AG04450 (cell line): ENCODE measurements at regions of chr14 and their contacts with region 1.

Region 1: DNA sequence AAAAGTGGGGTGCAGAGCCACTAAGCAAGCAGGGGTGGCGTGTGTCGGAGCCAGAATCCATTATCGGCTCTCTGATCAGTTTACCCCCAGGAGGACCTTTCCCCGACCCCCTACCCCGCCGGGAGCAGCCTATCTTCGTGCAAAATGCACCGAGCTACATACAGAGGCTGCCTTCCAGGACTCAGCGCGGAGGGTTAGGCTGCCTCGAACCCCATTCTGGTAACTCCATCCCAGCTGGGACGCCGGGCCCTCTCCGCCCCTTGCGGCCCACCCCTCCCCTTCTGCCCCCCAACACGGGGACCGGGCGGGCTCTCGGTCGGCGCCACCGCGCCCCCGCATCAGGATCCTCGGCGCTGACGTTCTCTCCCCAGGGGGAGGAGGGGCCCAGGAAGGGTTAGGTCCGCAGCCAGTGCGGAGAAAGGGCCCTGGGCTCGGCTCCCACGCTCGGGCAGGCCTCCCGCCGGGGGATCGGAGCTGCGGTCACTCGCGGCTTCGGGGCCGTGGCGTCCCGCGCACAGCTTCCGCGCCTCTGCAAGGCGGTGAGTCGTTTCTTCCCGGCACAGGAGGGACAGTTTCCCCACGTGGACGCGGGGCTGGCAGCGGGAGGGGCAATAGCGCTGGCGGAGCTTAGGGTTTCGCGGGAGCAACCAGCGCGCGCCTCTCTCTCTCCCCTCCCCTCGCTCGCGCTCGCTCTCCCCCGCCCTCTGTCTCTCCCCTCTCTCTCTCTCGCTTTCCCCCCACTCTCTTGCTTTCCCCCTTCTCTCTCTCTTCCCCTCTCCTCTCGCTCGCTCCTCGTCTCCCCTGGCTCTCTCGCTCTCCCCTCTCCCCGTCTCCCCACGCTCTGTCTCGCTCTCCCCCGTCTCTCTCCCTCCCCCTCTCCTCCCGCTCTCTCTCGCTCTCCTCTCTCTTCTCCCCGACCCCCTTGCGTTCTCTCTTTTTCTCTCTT is 12.5 kb upstream of the MAP3K9 start:
- DNase-seq: no peak
- H3K4me3 ChIP-seq: peak overlapping the region; percentile 70
- H3K27ac ChIP-seq: no peak overlapping the region
- H3K27me3 ChIP-seq: no peaks in the 10 kb centered on the region
- CTCF ChIP-seq: no peak

Region 2: GRCh38 chr14:70622111-70622712 is 199.6 kb before region 1 on chr14:
- CTCF ChIA-PET with region 1: interaction called, 10 read pairs
- POLR2A ChIA-PET with region 1: no interaction called
- DNase-seq: no peak
- H3K4me3 ChIP-seq: no peak overlapping the region
- H3K27ac ChIP-seq: no peak overlapping the region
- H3K27me3 ChIP-seq: no peaks in the 10 kb centered on the region
- CTCF ChIP-seq: peak; percentile 79

Region 3: DNA sequence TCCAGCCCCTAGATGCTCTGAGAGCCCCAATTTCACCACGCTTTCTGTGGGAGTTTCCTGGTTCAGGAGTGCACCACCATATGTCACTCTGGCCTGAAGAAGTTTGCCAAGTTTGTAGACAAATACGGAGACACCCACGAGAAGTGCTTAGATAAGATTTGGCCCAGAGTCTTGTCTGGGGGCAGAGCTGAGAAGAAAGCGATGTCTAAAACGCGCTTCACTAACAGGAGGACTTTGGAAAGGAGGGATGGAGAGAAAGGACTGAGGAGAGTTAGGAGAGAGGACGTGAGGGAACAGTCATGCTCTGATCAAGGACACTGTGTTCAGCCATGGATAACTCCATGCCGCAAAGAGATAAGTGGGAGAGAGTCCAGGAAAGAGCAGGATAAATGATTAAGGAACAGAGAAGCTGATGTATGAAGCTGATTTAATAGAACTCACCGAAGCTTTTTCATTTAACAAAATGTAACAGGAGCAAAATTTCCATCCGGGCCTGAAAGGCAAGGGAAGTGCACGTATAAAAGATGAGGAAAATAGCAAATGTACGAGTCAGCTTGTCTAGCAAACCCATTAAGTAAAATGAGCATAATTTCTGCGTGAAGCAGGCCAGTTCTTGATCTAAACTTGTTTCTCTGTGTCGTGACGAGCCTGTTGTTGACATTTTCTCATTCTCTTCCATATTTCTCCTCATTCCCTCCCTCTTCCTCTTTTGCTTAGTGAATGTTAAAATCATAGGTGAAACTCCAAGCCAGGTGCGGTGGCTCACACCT is 10.9 kb after region 1 on chr14:
- CTCF ChIA-PET with region 1: interaction called, 28 read pairs
- POLR2A ChIA-PET with region 1: no interaction called
- DNase-seq: no peak
- H3K4me3 ChIP-seq: no peak overlapping the region
- H3K27ac ChIP-seq: no peak overlapping the region
- H3K27me3 ChIP-seq: peaks cover 2% of the 10 kb centered on the region
- CTCF ChIP-seq: no peak

Region 4: DNA sequence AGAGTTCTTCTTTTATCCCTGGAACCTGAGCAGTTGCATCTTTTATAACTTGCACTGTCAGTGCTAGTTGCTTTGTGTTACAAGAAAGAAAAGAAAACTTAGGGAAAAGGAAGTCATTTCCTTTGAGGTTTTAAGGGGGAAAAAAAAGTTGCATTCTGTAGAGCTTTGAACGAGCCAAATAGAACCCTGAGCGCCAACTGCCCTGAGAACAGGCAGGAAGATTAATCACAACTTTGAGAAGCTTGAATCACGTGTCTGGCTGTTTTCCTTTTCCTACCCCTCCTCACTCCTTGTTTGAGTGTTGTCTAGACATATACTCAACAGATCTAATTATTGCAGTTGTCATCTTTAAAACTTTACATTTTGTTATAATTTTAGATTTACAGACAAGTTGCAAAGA is 97.9 kb after region 1 on chr14:
- CTCF ChIA-PET with region 1: interaction called, 18 read pairs
- POLR2A ChIA-PET with region 1: no interaction called
- DNase-seq: no peak
- H3K4me3 ChIP-seq: no peak overlapping the region
- H3K27ac ChIP-seq: no peak overlapping the region
- H3K27me3 ChIP-seq: no peaks in the 10 kb centered on the region
- CTCF ChIP-seq: no peak

Region 5: DNA sequence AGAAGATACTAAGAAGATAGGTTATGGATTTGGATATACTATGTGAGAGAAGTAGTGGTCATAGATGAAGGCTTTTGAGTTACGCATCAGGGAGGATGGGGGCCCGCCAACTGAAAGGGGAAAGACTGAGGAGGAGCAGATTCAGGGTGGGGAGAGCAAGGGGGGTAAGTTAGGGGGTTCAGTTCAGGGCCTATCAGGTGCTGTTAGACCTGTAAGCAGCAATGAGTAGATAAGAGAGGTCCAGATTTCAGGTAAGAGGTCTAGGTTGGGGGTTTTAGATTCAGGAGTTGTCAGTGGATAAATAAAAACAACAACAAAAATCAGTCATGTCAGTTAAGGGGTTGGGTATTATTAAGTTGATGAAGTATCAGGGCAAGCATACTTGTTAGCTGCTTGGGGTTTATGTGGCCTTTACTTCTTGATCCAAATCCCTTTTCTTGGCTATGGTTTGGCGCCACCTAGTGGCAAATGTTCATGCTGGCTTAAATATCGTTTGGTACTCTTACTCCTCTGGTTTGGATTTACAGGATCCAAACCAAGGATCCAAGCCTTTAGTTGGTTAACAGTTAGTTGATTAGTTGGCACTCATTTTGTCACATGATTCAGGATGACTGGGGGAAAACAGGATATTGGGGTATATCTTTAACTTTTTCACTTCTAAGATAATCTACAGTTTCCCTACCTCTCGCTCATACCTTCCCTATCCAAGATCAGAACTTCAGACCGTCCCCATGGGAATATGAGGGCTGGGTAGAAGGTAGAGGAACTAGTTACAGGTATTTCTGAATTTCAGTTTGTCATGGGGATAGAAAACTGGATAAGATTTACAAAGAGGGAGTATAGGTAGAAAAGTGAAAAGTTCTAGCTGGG is 150.5 kb after region 1 on chr14:
- CTCF ChIA-PET with region 1: interaction called, 36 read pairs
- POLR2A ChIA-PET with region 1: no interaction called
- DNase-seq: peak; percentile 82
- H3K4me3 ChIP-seq: no peak overlapping the region
- H3K27ac ChIP-seq: no peak overlapping the region
- H3K27me3 ChIP-seq: no peaks in the 10 kb centered on the region
- CTCF ChIP-seq: peak; percentile 94

Region 6: GRCh38 chr14:71070169-71070568 is 248.3 kb after region 1 on chr14:
- CTCF ChIA-PET with region 1: no interaction called
- POLR2A ChIA-PET with region 1: no interaction called
- DNase-seq: no peak
- H3K4me3 ChIP-seq: no peak overlapping the region
- H3K27ac ChIP-seq: no peak overlapping the region
- H3K27me3 ChIP-seq: no peaks in the 10 kb centered on the region
- CTCF ChIP-seq: no peak